ENCODE measurements at regions of chr6 and their contacts with region 1.

Region 1: GRCh38 chr6:15245361-15246216 is at the start of gene JARID2:
- DNase-seq: peak; percentile 92
- H3K4me3 Mint-ChIP-seq: peak within 1 kb of the TSS; percentile 98
- H3K27ac Mint-ChIP-seq: peak within 1 kb of the TSS; percentile 96
- H3K4me1 Mint-ChIP-seq: peaks cover 17% of the 10 kb centered on the region
- H3K27me3 Mint-ChIP-seq: no peaks in the 10 kb centered on the region
- total RNA-seq, gene JARID2: 60.5 and 62.5 TPM in 2 replicates

Region 2: GRCh38 chr6:14117158-14118090 is 1128.2 kb before region 1 on chr6 and contains the start of gene CD83:
- intact Hi-C with region 1: loop called (anchors 5 kb)
- DNase-seq: peak; percentile 82
- H3K4me3 Mint-ChIP-seq: peak within 1 kb of the TSS; percentile 96
- H3K27ac Mint-ChIP-seq: peak within 1 kb of the TSS; percentile 83
- H3K4me1 Mint-ChIP-seq: peaks cover 46% of the 10 kb centered on the region
- H3K27me3 Mint-ChIP-seq: peaks cover 36% of the 10 kb centered on the region
- total RNA-seq, gene CD83: 101 and 107 TPM in 2 replicates

Region 3: GRCh38 chr6:14423330-14423729 is 822.3 kb before region 1 on chr6:
- intact Hi-C with region 1: loop called (anchors 1 kb)
- DNase-seq: no peak
- H3K4me3 Mint-ChIP-seq: no peak overlapping the region
- H3K27ac Mint-ChIP-seq: peak overlapping the region; percentile 26
- H3K4me1 Mint-ChIP-seq: peaks cover 26% of the 10 kb centered on the region
- H3K27me3 Mint-ChIP-seq: no peaks in the 10 kb centered on the region

Region 4: DNA sequence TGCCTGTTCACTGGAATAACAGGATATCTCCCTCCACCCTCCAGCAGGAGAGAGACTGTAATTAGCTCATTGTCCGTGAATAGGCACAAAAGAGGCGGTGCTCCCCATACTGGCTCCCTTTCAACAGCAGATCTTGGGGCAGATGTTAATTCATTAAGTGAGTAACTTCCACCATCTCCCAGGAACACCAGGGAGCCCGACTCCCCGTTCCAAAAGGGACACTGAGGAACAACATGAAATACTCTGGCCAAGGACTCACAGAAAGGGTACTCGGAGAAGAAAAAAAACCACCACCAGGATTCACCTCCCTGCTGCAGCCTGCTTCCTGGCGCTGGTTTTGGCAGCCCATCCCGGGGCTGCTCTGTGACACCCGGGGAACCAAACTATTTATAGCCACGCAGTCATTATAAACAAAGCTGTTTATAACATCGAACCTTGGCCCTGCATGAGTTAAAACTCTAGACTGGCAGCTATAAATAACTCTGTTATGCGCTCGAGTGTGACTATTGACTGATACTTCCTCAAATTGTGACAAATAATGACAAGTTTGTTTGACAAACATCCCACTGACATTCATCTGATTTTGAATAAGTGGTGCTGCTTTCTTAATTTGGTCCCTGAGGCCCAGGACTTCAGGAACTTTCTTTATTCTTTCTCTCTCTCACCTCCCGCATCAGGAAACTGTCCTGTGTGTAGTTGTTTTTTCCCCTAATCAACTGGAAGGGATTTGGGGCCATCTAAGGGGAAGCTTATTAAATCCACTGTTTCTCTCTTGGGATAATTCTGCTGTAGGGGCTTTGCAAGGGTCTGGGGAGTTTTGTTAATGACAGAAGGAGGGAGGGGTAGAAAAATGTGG is 606.5 kb before region 1 on chr6:
- intact Hi-C with region 1: loop called (anchors 2 kb)
- DNase-seq: no peak
- H3K4me3 Mint-ChIP-seq: no peak overlapping the region
- H3K27ac Mint-ChIP-seq: no peak overlapping the region
- H3K4me1 Mint-ChIP-seq: peaks cover 70% of the 10 kb centered on the region
- H3K27me3 Mint-ChIP-seq: peaks cover 8% of the 10 kb centered on the region

Region 5: DNA sequence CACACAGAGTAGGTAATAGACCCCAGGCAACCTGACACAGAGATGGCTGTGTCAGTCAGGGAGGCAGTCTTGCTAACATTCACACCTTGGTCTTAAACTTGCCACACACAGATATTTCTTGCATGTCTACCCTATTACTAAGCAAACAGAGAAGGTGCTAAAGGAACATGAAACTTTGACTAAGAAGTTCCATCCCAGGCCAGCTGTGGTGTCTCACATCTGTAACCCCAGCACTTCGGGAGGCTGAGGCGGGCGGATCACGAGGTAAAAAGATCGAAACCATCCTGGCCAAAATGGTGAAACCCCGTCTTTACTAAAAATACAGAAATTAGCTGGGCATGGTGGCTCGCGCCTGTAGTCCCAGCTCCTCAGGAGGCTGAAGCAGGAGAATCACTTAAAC is 222.1 kb before region 1 on chr6:
- intact Hi-C with region 1: loop called (anchors 1 kb)
- DNase-seq: peak; percentile 48
- H3K4me3 Mint-ChIP-seq: peak overlapping the region; percentile 31
- H3K27ac Mint-ChIP-seq: peak overlapping the region; percentile 94
- H3K4me1 Mint-ChIP-seq: peaks cover 53% of the 10 kb centered on the region
- H3K27me3 Mint-ChIP-seq: no peaks in the 10 kb centered on the region

Region 6: GRCh38 chr6:15132854-15133670 is 112.5 kb before region 1 on chr6:
- intact Hi-C with region 1: no loop called
- DNase-seq: no peak
- H3K4me3 Mint-ChIP-seq: no peak overlapping the region
- H3K27ac Mint-ChIP-seq: no peak overlapping the region
- H3K4me1 Mint-ChIP-seq: peaks cover 54% of the 10 kb centered on the region
- H3K27me3 Mint-ChIP-seq: no peaks in the 10 kb centered on the region

Region 7: DNA sequence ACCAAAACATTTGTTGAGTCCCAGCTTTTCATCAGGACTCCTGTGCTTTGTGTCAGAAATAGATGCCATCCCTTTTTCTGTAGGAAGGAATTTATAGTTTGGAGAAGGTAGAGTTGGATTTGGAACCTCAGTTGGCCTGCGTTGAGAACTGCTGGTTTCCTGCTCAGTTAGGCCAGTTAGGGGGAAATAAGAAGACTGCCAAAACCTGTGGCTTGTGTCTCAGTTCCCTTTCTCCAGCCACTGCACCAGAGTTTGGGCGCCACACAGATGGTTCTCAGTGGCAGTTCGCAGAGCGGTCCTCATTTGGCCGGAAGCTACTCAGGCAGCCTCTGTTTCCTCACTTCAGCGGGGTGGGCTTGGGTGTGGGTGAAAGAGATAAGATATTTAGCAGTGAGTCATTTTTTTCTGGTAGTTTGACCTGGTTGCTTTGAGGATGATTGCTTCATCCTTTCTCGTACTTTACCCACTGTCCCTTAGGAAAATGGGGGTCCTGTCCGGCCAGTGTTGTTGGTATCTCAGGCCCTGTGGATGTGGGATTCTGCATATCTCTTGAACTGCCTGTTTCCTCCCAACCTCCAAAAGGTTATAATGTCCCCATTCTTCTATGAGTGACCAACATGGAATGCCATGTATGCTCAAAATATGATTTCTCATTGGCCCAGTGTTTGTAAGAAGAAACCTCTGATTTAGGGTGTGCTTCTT is 54.0 kb after region 1 on chr6:
- intact Hi-C with region 1: loop called (anchors 2 kb)
- DNase-seq: no peak
- H3K4me3 Mint-ChIP-seq: peak overlapping the region; percentile 69
- H3K27ac Mint-ChIP-seq: peak overlapping the region; percentile 69
- H3K4me1 Mint-ChIP-seq: peaks cover 82% of the 10 kb centered on the region
- H3K27me3 Mint-ChIP-seq: no peaks in the 10 kb centered on the region

Region 8: DNA sequence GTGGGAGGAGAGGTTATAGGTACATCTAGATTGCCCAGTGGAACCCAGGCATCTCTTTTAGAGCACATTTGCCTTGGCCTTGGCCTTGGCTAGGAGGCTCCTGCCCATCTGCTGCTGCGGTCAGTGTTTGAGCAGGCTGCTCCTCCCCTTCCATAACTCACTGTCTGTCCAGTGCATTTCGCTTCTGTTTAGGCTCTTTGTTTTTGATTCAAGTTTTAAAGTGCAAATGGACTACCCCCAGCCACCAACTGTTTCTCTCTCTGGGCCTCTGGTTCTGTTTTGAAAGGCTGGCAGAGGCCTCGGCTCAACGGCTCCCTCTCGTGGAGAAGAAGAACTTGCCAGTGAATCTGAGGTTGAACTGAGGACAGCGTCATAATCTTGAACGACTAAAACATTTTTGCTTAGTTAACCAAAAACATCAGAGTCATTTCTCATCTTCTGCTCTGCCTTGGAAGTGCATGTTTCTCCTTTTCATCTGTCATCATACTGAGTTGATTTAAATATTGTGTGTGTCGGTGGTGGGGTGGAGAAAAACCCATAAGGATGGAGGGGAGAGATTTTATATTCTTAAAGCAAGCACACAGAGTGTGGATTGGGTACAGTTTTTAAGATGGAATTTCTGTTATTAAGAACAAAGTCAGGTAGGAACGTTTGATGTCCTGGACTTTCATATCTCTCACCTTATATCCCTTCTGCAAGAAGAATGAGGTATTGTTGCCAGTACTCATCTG is 245.8 kb after region 1 on chr6:
- intact Hi-C with region 1: loop called (anchors 1 kb)
- DNase-seq: peak; percentile 55
- H3K4me3 Mint-ChIP-seq: no peak overlapping the region
- H3K27ac Mint-ChIP-seq: peak overlapping the region; percentile 77
- H3K4me1 Mint-ChIP-seq: peaks cover 31% of the 10 kb centered on the region
- H3K27me3 Mint-ChIP-seq: peaks cover 1% of the 10 kb centered on the region